ENCODE measurements at regions of chr16 and their contacts with region 1.

Region 1: GRCh38 chr16:55465077-55465896 is 13.7 kb upstream of the MMP2 start:
- DNase-seq: peak; percentile 64
- ATAC-seq: peak; percentile 95
- H3K4me3 ChIP-seq: no peak overlapping the region
- H3K27ac ChIP-seq: no peak overlapping the region
- H3K4me1 ChIP-seq: peaks cover 0 to 2% of the 10 kb centered on the region in 2 experiments; a peak in 2 of 4 replicates
- H3K27me3 ChIP-seq: no peaks in the 10 kb centered on the region
- CTCF ChIP-seq: peak; percentile 98 to 100 (median 100)
- POLR2A ChIP-seq: no peak
- RAD21 ChIP-seq: peak; percentile 100

Region 2: DNA sequence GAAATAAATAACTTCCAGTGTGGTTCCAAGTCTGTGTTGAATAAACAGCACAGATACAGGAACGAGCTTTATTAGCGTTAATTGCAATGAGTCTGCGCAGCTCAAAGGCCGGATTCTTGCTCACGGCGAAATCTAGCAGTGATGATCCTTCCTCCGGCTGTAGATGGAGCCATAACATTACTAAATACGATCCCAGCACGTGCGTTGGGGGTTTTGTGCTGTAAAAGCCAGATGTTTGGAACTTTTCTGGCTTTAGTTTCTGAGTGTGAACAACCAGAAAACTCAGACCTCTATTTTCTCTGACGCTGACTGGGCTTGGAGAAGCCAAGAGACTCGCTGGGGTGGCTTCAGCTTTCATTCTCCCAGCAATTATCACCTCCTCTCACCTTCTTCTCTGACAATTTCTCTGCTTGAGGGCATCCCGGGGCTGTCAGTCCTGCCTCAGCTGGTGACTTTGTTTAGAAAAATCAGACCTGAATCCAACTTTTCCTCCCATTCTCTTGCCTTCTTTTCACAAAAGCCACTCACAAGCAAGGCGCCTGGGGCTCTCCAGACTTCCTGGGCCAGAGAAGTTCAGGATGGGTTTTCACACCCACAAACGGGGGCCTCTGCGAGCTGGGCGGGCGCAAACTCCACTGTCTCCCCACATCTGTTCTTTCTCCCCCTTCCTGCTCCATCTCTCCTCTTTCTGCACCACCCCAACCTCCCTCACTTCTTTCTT is 1915.2 kb before region 1 on chr16:
- CTCF ChIA-PET with region 1: interaction called, 19 read pairs
- POLR2A ChIA-PET with region 1: no interaction called
- RAD21 ChIA-PET with region 1: interaction called in 1 of 2 experiments, 3 read pairs
- intact Hi-C with region 1: loop called (anchors 10 kb)
- DNase-seq: peak; percentile 46
- ATAC-seq: peak; percentile 86
- H3K4me3 ChIP-seq: no peak overlapping the region
- H3K27ac ChIP-seq: no peak overlapping the region
- H3K4me1 ChIP-seq: peaks cover 0 to 9% of the 10 kb centered on the region in 2 experiments; a peak in 2 of 4 replicates
- H3K27me3 ChIP-seq: no peaks in the 10 kb centered on the region
- CTCF ChIP-seq: peak; percentile 59 to 82 (median 61); a peak in 5 of 6 replicates
- POLR2A ChIP-seq: no peak
- RAD21 ChIP-seq: peak; percentile 89

Region 3: DNA sequence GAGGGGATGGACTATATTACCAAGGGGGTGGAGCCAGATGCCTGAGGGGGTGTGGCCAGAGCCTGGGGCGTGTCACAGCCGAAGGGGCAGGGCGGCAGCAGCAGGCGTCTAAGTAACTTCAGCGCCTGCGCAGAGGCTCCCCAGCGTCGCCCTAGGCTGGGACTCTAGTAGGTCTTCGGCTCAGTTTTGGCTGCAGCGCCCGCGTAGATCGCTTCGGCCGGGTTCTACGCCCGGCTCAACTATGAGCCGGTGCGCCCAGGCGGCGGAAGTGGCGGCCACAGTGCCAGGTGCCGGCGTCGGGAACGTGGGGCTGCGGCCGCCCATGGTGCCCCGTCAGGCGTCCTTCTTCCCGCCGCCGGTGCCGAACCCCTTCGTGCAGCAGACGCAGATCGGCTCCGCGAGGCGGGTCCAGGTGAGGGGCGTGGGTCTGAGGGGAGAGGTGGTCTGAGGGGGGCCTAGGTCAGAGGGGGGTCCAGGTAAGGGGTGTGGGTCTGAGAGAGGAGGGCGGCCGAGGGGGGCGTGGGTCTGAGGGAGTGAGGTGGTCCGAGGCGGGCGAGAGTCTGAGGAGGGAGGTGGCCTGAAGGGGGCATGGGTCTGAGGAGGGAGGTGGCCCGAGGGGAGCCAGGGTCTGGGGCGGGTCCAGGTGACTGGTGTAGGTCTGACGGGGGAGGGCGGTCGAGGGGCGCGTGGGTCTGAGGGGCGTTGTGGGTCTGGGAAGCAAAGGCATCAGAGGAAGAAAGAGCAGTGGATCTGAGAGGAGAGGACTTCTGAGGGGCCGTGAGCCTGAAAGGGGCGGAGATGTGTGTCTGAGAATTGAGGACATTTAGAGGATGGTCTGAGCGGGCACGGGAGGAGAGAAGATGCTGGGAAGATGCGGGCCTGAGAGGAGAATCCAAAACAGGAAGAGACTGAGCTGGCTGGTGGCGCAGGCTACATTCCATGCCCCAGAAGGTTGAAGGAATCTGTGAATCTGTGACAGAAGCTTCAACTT is 43.9 kb after region 1 on chr16 and contains the start of gene LPCAT2:
- CTCF ChIA-PET with region 1: interaction called, 3 read pairs
- POLR2A ChIA-PET with region 1: no interaction called
- RAD21 ChIA-PET with region 1: no interaction called
- intact Hi-C with region 1: loop called (anchors 5 kb)
- DNase-seq: peak; percentile 71
- ATAC-seq: peak; percentile 99
- H3K4me3 ChIP-seq: peak within 1 kb of the TSS; percentile 64 to 84
- H3K27ac ChIP-seq: peak within 1 kb of the TSS; percentile 50; the same call in 1 of the 2 replicates
- H3K4me1 ChIP-seq: peaks cover 3 to 15% of the 10 kb centered on the region in 2 experiments; a peak in 3 of 4 replicates
- H3K27me3 ChIP-seq: no peaks in the 10 kb centered on the region
- CTCF ChIP-seq: no peak
- POLR2A ChIP-seq: peak; percentile 73
- RAD21 ChIP-seq: no peak
- total RNA-seq, gene LPCAT2: 13.1 TPM

Region 4: GRCh38 chr16:55701442-55702319 is 236.4 kb after region 1 on chr16:
- CTCF ChIA-PET with region 1: interaction called, 135 read pairs
- POLR2A ChIA-PET with region 1: interaction called, 4 read pairs
- RAD21 ChIA-PET with region 1: interaction called, 15 to 23 read pairs
- intact Hi-C with region 1: loop called (anchors 1 kb)
- DNase-seq: peak; percentile 46
- ATAC-seq: peak; percentile 93
- H3K4me3 ChIP-seq: no peak overlapping the region
- H3K27ac ChIP-seq: no peak overlapping the region
- H3K4me1 ChIP-seq: no peaks in the 10 kb centered on the region
- H3K27me3 ChIP-seq: peaks cover 34% of the 10 kb centered on the region
- CTCF ChIP-seq: peak; percentile 79 to 85 (median 82)
- POLR2A ChIP-seq: no peak
- RAD21 ChIP-seq: peak; percentile 73

Region 5: GRCh38 chr16:56324406-56324805 is 859.1 kb after region 1 on chr16:
- CTCF ChIA-PET with region 1: interaction called, 3 read pairs
- POLR2A ChIA-PET with region 1: no interaction called
- RAD21 ChIA-PET with region 1: no interaction called
- intact Hi-C with region 1: loop called (anchors 10 kb)
- DNase-seq: peak; percentile 26
- ATAC-seq: peak; percentile 89
- H3K4me3 ChIP-seq: no peak overlapping the region
- H3K27ac ChIP-seq: no peak overlapping the region
- H3K4me1 ChIP-seq: peaks cover 5 to 25% of the 10 kb centered on the region in 2 experiments; a peak in 3 of 4 replicates
- H3K27me3 ChIP-seq: no peaks in the 10 kb centered on the region
- CTCF ChIP-seq: no peak
- POLR2A ChIP-seq: no peak
- RAD21 ChIP-seq: no peak